PC-3 (cell line): ENCODE measurements at regions of chr2 and their contacts with region 1.

Region 1: GRCh38 chr2:38665854-38666555 is at the start of gene GALM:
- DNase-seq: peak; percentile 94
- ATAC-seq: peak; percentile 91
- H3K4me3 ChIP-seq: peak within 1 kb of the TSS; percentile 83
- H3K27ac ChIP-seq: peak within 1 kb of the TSS; percentile 21
- H3K4me1 ChIP-seq: peaks cover 14% of the 10 kb centered on the region
- H3K27me3 ChIP-seq: no peaks in the 10 kb centered on the region
- CTCF ChIP-seq: no peak
- total RNA-seq, gene GALM: 22.7 and 26.4 TPM in 2 replicates

Region 2: DNA sequence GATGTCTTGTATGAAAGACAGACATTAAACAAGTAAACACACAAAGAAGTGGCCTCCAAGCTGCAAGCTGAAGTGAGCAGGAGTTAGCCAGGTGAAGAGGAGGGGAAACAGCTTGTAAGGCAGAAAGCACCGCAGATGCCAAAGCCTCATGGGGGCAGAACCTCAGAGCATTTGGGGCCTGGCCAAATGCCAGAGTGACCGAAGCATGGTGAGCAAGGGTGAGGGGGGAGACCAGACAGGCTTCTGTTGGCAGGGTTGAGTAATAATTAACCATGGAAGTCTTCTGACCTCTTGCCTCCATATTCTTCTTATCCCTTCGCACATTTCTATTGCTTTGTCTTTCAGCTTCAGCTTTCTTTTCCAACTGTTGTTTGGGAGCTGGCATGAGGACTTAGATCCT is 1316.0 kb before region 1 on chr2:
- CTCF ChIA-PET with region 1: no interaction called
- POLR2A ChIA-PET with region 1: no interaction called
- intact Hi-C with region 1: no loop called
- DNase-seq: peak; percentile 26
- ATAC-seq: no peak
- H3K4me3 ChIP-seq: no peak overlapping the region
- H3K27ac ChIP-seq: no peak overlapping the region
- H3K4me1 ChIP-seq: peaks cover 4% of the 10 kb centered on the region; the same call in 1 of the 2 replicates
- H3K27me3 ChIP-seq: no peaks in the 10 kb centered on the region
- CTCF ChIP-seq: no peak

Region 3: GRCh38 chr2:38409156-38410122 is 256.6 kb before region 1 on chr2:
- CTCF ChIA-PET with region 1: no interaction called
- POLR2A ChIA-PET with region 1: no interaction called
- intact Hi-C with region 1: no loop called
- DNase-seq: peak; percentile 39
- ATAC-seq: no peak
- H3K4me3 ChIP-seq: no peak overlapping the region
- H3K27ac ChIP-seq: no peak overlapping the region
- H3K4me1 ChIP-seq: no peaks in the 10 kb centered on the region
- H3K27me3 ChIP-seq: no peaks in the 10 kb centered on the region
- CTCF ChIP-seq: no peak

Region 4: DNA sequence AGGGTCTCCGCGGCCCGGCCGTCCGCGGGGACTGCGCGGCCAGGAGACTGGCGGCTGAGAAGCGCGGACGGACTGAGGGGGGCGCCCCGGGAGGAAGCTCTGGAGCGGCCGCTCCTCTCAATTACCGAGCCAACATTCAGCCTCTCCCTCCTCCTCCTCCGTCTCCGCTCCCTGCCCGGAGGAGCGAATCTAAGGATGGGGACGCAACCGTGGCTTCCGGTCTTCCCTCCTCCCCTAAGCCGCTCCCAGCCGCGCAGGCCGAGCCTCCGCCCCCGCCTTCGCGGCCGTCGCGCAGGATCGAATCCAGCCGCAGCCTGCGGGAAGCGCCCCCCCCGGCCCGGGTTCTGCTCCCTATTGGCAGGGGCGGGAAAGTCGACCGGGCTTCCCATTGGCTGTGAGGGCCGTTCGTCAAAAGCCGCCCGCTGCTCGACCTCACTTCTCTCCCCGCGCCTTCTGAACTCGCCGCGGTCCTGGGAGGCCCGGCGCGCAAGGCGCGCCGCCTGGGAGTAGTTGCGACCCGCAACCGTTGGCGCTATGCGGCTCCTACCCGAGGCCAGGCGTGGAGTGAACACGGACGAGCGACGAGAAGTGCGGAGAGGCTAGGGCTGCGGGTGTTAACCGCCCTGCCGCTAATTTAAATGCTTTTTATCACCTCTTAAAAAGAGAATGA is 63.1 kb before region 1 on chr2 and contains the start of gene HNRNPLL:
- CTCF ChIA-PET with region 1: no interaction called
- POLR2A ChIA-PET with region 1: no interaction called
- intact Hi-C with region 1: loop called (anchors 1 kb)
- DNase-seq: peak; percentile 98
- ATAC-seq: peak; percentile 81
- H3K4me3 ChIP-seq: peak within 1 kb of the TSS; percentile 84
- H3K27ac ChIP-seq: peak within 1 kb of the TSS; percentile 62
- H3K4me1 ChIP-seq: peaks cover 37% of the 10 kb centered on the region
- H3K27me3 ChIP-seq: no peaks in the 10 kb centered on the region
- CTCF ChIP-seq: no peak
- total RNA-seq, gene HNRNPLL: 30.1 and 43.8 TPM in 2 replicates

Region 5: GRCh38 chr2:38690499-38691294 is 24.7 kb after region 1 on chr2:
- CTCF ChIA-PET with region 1: interaction called, 3 read pairs
- POLR2A ChIA-PET with region 1: no interaction called
- intact Hi-C with region 1: loop called (anchors 2 kb)
- DNase-seq: peak; percentile 96
- ATAC-seq: peak; percentile 88
- H3K4me3 ChIP-seq: peak overlapping the region; percentile 20; the same call in 1 of the 2 replicates
- H3K27ac ChIP-seq: peak overlapping the region; percentile 96
- H3K4me1 ChIP-seq: peaks cover 56% of the 10 kb centered on the region
- H3K27me3 ChIP-seq: no peaks in the 10 kb centered on the region
- CTCF ChIP-seq: no peak

Region 6: GRCh38 chr2:38720613-38721241 is 54.7 kb after region 1 on chr2:
- CTCF ChIA-PET with region 1: no interaction called
- POLR2A ChIA-PET with region 1: no interaction called
- intact Hi-C with region 1: loop called (anchors 10 kb)
- DNase-seq: peak; percentile 95
- ATAC-seq: peak; percentile 89
- H3K4me3 ChIP-seq: no peak overlapping the region
- H3K27ac ChIP-seq: peak overlapping the region; percentile 38
- H3K4me1 ChIP-seq: peaks cover 27% of the 10 kb centered on the region
- H3K27me3 ChIP-seq: no peaks in the 10 kb centered on the region
- CTCF ChIP-seq: no peak